ENCODE measurements at regions of chr3 and their contacts with region 1.

Region 1: DNA sequence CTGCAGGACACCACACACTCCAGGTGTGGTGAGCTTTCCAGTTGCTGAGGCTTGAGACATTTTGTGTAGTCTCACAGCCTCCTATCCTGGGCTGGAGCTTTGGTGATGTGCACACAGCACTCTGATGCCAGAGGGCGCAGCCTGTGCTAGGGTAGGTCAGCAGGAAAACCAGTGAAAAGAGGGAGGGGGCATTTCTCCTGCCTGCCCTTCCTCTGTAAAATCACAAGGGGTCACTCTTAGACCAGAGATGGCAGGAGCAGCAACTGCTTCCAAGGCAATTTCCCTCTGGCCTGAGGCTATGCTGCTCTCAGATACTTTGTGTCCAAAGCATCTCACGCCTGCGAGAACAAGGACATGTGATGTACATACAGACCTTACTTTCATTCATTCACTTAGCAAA is 16.5 kb upstream of the MUSTN1 start:
- DNase-seq: peak; percentile 71
- CTCF ChIP-seq: peak; percentile 65

Region 2: DNA sequence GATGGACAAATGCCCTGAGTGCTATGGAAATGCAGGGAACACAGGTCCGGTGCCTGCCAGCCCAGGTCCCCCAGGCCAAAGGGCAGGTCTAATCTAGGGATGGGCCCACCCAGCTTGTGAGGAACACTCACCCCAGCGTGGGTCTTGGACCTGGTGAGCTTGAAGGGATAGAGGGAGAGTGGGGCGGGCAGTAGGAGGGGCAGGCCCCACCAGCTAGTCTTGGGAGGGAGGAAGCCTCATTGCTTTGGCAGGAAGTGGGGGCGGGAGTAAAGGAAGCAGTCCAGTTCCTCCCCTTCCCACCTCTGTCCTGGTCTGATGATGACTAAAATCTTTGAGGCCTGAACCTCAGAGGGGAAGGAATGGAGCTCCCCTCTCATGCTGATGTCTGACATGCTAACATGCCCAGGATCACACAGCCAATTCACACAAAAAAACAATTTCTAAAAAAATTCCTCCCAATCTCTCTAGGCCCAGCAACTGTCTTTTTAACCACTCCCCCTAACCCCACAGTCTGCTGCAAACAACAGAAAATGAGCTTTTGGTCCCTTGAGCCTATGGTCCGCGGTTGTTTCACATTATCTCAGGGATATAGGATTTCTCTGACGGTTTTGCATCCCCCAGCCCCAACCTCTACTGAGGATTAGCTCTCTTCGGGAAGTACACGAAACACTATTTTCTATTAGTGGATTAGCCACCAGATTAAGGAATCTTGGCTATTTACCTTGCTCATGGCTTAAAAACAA is 764.3 kb before region 1 on chr3:
- CTCF ChIA-PET with region 1: no interaction called
- POLR2A ChIA-PET with region 1: no interaction called
- DNase-seq: peak; percentile 48
- CTCF ChIP-seq: no peak

Region 3: DNA sequence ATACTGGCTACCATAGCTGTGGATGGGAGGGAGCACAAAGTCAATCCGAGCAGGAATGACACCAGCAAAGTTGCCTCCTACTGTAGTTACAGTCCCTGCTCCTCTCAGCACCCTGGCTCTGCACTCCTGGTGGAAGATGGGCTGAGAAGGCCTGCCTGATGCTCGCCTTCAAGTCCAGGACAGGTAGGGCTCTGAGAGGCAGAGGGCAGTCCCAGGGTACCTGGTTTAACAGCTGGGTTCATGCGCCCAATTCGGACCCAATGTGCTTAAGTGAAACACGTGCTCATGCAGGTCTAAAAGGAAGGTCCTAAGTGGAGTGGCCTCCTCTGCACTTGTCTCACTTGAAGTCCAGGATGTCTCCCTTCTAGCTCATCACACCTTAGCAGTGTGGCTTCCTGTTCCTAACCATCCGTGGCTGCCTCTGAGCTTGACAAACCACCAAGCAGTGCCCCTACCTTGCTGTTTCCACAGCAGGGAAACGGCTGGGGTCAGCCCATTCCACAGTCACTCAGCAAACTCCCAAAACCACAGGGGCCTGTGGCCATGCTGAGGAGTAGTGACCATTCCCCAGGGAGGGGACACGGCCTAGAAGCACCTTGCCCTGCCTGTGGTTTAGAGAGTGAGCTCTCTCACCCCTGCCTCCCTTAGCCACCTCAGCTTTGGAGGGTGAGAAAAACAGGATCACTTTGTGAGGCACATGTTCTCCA is 12.6 kb before region 1 on chr3:
- CTCF ChIA-PET with region 1: interaction called, 12 read pairs
- POLR2A ChIA-PET with region 1: no interaction called
- DNase-seq: no peak
- CTCF ChIP-seq: no peak

Region 4: DNA sequence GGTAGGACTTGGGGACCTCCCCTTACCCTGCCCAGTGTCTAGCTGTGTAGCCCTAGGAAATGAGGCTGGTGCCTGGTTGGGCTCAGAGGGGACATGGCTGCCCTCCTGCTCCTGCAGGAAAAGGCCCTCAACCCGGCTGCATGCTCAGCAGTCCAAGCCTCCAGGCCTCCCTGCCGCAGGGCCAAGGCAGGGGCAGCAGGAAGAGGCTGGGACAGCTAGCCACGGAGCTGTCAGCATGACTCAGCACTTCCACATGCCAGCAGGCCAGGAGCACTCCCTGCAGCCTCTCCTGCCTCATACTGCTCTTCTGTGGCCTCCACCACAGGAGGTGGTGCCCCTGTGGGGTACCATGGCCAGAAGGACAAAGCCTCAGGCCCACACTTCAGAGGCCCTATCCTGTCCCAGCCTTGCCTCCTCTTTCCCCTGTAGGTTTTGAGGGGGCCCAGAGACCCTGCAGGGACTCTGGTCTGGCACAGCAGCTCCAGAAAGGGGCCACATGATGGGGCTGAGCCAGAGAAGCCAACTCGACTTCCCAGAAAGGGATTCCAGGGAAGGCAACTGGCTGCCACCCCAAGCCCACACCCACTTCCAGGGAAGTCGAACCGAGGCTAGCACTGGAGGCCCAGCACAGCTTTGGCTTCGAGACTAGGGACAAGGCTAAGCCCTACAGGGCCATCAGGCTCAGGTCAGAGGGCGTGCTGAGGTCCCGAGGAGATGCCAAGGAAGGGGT is 384.9 kb after region 1 on chr3:
- CTCF ChIA-PET with region 1: no interaction called
- POLR2A ChIA-PET with region 1: no interaction called
- DNase-seq: no peak
- CTCF ChIP-seq: no peak